GM10248 (cell line): ENCODE measurements at regions of chr2 and their contacts with region 1.

Region 1: GRCh38 chr2:88669371-88670214 is 21.9 kb upstream of the RPIA start:
- DNase-seq: peak; percentile 57
- CTCF ChIP-seq: peak; percentile 82

Region 2: GRCh38 chr2:88059979-88060906 is 609.4 kb before region 1 on chr2:
- CTCF ChIA-PET with region 1: interaction called, 12 read pairs
- POLR2A ChIA-PET with region 1: no interaction called
- DNase-seq: peak; percentile 66
- CTCF ChIP-seq: peak; percentile 72

Region 3: DNA sequence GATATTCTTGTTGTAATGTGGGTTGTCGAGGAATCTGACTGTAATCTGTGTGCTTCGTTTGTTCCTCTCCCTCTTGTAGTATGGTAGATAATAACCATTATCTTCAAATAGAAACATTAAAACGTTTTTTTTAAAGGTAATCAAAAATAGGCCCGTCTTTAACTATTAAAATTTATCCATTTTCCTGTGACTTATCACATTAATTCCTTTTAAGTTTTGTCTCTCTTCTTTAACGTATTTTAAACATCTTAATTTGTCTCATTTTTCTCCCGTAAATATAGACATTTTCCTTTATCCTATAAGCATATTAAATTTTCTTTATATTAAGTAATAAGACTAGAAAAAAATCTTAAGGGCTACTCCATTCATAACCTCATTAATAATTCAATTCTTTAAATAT is 83.6 kb before region 1 on chr2:
- CTCF ChIA-PET with region 1: interaction called, 155 read pairs
- POLR2A ChIA-PET with region 1: no interaction called
- DNase-seq: no peak
- CTCF ChIP-seq: no peak

Region 4: GRCh38 chr2:88606371-88607030 is 63.1 kb before region 1 on chr2:
- CTCF ChIA-PET with region 1: interaction called, 15 read pairs
- POLR2A ChIA-PET with region 1: no interaction called
- DNase-seq: peak; percentile 34
- CTCF ChIP-seq: no peak

Region 5: DNA sequence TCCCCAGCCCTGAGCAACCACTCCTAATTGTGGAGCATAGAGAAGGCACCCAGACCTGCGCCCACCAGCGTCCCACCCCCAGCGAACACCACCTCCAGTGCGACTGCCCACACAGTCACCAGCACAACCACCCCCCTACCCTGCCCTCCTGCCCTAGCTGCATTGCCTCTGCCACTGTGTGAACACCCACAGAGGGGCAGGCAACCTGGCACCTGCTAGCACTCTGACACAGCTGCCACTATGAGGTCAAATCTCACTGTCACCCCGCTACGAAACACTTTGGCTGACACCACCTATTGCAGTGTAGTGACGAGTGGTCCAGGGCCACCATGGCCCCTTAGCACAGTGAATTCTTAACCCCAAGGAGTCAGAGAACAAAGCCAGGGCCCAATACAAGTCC is 28.3 kb before region 1 on chr2:
- CTCF ChIA-PET with region 1: interaction called, 29 read pairs
- POLR2A ChIA-PET with region 1: no interaction called
- DNase-seq: no peak
- CTCF ChIP-seq: no peak

Region 6: DNA sequence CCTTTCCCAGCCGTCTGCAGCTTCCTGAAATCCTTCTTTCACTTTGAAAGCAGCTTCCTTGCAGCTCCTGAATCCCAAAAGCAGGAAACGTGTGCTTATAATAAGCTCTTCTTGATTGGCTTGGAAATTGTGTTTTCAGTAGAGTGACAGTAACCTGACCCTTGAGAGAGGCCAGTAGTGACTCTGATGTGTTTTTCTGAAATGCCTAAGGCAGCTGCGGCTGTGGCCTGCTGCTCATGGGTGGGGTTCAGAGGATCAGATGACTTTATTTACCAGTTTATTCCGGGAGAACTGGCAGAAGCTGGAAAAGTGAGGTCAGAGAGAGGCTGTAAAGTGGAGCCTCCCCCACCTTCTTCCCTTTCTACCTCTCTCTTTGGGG is 10.1 kb before region 1 on chr2:
- CTCF ChIA-PET with region 1: interaction called, 184 read pairs
- POLR2A ChIA-PET with region 1: no interaction called
- DNase-seq: no peak
- CTCF ChIP-seq: no peak

Region 7: GRCh38 chr2:88686320-88686719 is 16.7 kb after region 1 on chr2:
- CTCF ChIA-PET with region 1: interaction called, 43 read pairs
- POLR2A ChIA-PET with region 1: no interaction called
- DNase-seq: no peak
- CTCF ChIP-seq: no peak

Region 8: DNA sequence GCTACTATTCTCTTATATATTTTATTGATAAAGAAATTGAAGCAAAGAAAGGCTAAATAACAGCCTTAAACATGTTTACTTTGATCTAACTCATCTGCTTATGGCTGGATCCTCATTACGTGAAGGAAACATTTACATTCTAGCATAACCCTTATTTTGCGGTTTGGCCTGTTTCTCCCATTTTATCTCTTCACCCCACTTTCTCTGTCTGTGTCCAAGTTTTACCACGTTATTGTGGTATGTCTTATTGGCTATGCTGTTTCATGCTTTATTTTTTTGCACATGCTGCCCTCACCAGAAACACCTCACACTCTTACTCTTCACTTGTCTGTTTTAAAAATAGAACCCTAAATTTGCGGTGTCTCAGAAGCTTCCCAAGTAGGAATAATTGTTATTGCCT is 100.4 kb after region 1 on chr2:
- CTCF ChIA-PET with region 1: no interaction called
- POLR2A ChIA-PET with region 1: no interaction called
- DNase-seq: no peak
- CTCF ChIP-seq: no peak